HAP-1 (cell line): ENCODE measurements at regions of chrX and their contacts with region 1.

Region 1: GRCh38 chrX:19372170-19372546 is 28.4 kb downstream of the PDHA1 start:
- DNase-seq: peak; percentile 88 to 91
- H3K4me3 ChIP-seq: peak overlapping the region; percentile 7; the same call in 1 of the 2 replicates
- H3K4me1 ChIP-seq: peaks cover 5% of the 10 kb centered on the region
- H3K27me3 ChIP-seq: no peaks in the 10 kb centered on the region

Region 2: DNA sequence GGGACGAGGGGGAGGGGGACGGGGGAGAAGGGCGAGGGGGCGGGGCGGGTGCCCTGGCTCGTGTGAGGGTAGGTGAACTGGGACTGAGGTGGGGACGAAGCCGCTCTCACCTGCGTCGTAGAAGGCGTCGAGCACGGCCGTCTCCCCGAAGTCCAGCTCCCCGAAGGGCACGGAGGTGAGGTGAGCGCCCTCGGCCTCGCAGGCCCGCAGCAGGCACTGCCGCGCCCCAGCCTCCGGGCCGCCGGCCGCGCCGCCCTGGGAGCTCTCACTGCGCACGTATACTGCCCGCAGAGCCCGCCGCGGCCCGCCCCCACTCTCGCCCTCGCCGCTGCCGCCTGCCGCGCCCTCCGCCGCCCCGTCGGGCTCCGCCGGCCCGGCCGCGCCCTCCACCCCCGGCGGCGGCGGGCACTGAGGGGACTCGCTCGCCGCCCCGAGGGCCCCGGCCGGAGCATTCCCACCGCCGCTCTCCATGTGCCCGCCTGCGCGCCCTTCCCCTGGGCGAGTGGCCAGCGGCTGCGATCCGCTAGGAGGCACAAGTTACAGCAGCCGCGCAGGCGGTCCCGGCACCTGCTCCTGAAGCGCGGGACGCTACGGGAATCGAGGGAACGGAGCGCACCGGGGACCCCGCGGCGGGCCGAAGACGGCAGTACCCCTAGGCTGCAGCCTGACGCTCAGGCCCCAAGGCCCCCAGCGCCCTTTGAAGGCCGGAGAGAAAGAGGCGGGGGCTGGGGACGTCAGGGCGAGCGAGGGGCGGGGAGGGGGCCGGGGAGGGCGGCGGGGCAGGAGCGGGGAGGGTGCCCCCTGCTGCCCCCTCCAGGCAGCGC is 142.8 kb after region 1 on chrX and contains the start of gene MAP3K15:
- in situ Hi-C with region 1: loop called (anchors 10 kb)
- DNase-seq: peak; percentile 56 to 77
- H3K4me3 ChIP-seq: peak within 1 kb of the TSS; percentile 60
- H3K4me1 ChIP-seq: peaks cover 3% of the 10 kb centered on the region; the same call in 1 of the 2 replicates
- H3K27me3 ChIP-seq: no peaks in the 10 kb centered on the region